ENCODE measurements at regions of chr9 and their contacts with region 1.

Region 1: DNA sequence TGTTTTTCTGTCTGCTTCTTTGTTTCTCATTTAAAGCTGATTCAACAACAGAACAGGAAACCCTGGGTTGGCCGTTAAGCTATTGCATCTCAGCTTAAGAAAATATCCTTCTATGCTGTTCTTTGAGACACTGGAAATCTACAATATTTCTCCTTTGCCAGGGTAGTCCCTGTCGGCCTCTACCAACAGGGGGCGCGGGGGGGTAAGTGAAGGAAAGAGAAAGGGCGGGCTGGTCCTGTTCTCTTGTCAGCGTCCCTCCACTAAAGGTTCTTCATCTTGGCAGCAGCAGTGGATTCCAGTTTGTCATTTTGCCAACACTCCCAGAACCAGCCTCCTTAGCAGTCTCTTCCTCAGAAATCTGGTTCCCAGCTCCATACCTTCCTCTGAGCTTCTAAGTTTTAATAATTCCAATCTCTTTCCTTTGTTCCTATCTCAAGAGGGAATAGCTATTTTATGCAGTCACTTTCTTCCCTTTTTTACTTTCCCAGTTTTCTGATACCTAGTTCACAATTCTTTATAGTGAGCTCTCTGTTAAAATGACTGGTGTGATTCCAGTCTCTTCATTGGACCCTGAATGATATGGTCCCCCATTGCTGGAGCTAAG is 222.3 kb downstream of the GLIS3 start:
- DNase-seq: peak in 1 of 2 experiments; percentile 92
- H3K4me3 ChIP-seq: no peak overlapping the region
- H3K27ac ChIP-seq: no peak overlapping the region
- H3K4me1 ChIP-seq: no peaks in the 10 kb centered on the region; a peak in 1 of 7 replicates
- H3K27me3 ChIP-seq: no peaks in the 10 kb centered on the region
- CTCF ChIP-seq: peak; percentile 62 to 80 (median 75)
- EP300 ChIP-seq: no peak
- POLR2A ChIP-seq: no peak
- RAD21 ChIP-seq: peak; percentile 61 to 72

Region 2: GRCh38 chr9:3732077-3733038 is 345.2 kb before region 1 on chr9:
- CTCF ChIA-PET with region 1: interaction called, 14 read pairs
- POLR2A ChIA-PET with region 1: no interaction called
- DNase-seq: peak in 1 of 2 experiments; percentile 25
- H3K4me3 ChIP-seq: no peak overlapping the region
- H3K27ac ChIP-seq: no peak overlapping the region
- H3K4me1 ChIP-seq: no peaks in the 10 kb centered on the region
- H3K27me3 ChIP-seq: no peaks in the 10 kb centered on the region
- CTCF ChIP-seq: peak in 2 of 3 experiments; percentile 68 to 75; a peak in 3 of 4 replicates
- EP300 ChIP-seq: no peak
- POLR2A ChIP-seq: no peak
- RAD21 ChIP-seq: peak; percentile 87 to 92

Region 3: DNA sequence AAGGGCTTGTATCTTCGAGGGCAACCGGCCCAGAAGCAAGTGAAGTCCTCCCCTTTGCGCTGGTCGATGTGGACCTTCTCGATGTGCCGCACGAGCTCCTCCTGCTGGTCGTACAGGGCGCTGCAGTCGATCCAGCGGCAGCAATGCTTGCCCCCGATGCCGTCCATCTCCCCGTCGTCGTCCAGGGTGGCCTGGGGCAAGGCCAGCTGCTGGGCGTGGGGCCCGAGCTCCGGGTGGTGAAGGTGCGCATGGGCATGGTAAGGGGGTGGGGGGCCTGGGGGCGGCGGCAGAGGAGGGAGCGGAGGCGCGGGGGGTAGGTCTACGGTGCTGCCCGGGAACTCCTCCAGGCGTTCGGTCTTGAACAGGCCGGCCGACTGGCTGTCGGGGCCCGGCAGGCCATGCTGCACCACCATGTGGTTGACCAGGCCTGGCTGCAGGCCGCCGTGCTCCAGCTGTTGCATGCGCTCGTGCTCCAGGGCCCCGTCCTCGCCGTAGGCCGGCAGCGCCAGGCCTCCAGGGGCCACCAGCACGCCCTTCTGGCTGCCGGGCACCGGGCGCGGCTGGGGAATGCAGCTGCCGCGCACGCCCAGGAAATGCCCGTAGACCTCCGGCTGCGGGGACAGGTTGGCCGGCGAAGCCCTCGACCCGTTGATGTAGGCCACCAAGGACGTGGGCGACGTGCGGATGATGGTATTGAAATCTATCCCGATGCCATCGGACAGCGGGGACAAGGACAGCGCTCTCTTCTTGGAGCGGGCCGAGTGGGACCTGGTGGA is 40.4 kb after region 1 on chr9:
- CTCF ChIA-PET with region 1: interaction called, 16 read pairs
- POLR2A ChIA-PET with region 1: no interaction called
- DNase-seq: peak; percentile 36 to 89
- H3K4me3 ChIP-seq: no peak overlapping the region
- H3K27ac ChIP-seq: no peak overlapping the region
- H3K4me1 ChIP-seq: no peaks in the 10 kb centered on the region
- H3K27me3 ChIP-seq: no peaks in the 10 kb centered on the region
- CTCF ChIP-seq: peak; percentile 63 to 82 (median 82)
- EP300 ChIP-seq: no peak
- POLR2A ChIP-seq: no peak
- RAD21 ChIP-seq: peak; percentile 76 to 82

Region 4: GRCh38 chr9:4157584-4158499 is 80.2 kb after region 1 on chr9:
- CTCF ChIA-PET with region 1: interaction called, 10 read pairs
- POLR2A ChIA-PET with region 1: no interaction called
- DNase-seq: no peak
- H3K4me3 ChIP-seq: no peak overlapping the region
- H3K27ac ChIP-seq: no peak overlapping the region
- H3K4me1 ChIP-seq: no peaks in the 10 kb centered on the region
- H3K27me3 ChIP-seq: no peaks in the 10 kb centered on the region
- CTCF ChIP-seq: no peak
- EP300 ChIP-seq: no peak
- POLR2A ChIP-seq: no peak
- RAD21 ChIP-seq: no peak

Region 5: GRCh38 chr9:4228606-4229005 is 151.0 kb after region 1 on chr9:
- CTCF ChIA-PET with region 1: interaction called, 14 read pairs
- POLR2A ChIA-PET with region 1: no interaction called
- DNase-seq: no peak
- H3K4me3 ChIP-seq: no peak overlapping the region
- H3K27ac ChIP-seq: no peak overlapping the region
- H3K4me1 ChIP-seq: no peaks in the 10 kb centered on the region
- H3K27me3 ChIP-seq: no peaks in the 10 kb centered on the region
- CTCF ChIP-seq: peak in 2 of 3 experiments; percentile 13 to 39; a peak in 2 of 4 replicates
- EP300 ChIP-seq: no peak
- POLR2A ChIP-seq: no peak
- RAD21 ChIP-seq: peak; percentile 30 to 34